Activated CD8-positive, alpha-beta memory T cell treated with anti-CD3 and anti-CD28 coated beads, Interleukin-2, amount 10 ng/mL, durations not matched to agents 7 days and 5 days (primary cell): ENCODE measurements at regions of chr1 and their contacts with region 1.

Region 1: GRCh38 chr1:999725-1000356 is at the start of gene HES4:
- DNase-seq: peak; percentile 45
- ATAC-seq: peak; percentile 34
- H3K4me3 Mint-ChIP-seq: peak within 1 kb of the TSS; percentile 54
- H3K27ac Mint-ChIP-seq: peak within 1 kb of the TSS; percentile 75
- H3K4me1 Mint-ChIP-seq: peaks cover 15% of the 10 kb centered on the region
- H3K27me3 Mint-ChIP-seq: peaks cover 48% of the 10 kb centered on the region
- total RNA-seq, gene HES4: 0.61 to 1.6 TPM

Region 2: DNA sequence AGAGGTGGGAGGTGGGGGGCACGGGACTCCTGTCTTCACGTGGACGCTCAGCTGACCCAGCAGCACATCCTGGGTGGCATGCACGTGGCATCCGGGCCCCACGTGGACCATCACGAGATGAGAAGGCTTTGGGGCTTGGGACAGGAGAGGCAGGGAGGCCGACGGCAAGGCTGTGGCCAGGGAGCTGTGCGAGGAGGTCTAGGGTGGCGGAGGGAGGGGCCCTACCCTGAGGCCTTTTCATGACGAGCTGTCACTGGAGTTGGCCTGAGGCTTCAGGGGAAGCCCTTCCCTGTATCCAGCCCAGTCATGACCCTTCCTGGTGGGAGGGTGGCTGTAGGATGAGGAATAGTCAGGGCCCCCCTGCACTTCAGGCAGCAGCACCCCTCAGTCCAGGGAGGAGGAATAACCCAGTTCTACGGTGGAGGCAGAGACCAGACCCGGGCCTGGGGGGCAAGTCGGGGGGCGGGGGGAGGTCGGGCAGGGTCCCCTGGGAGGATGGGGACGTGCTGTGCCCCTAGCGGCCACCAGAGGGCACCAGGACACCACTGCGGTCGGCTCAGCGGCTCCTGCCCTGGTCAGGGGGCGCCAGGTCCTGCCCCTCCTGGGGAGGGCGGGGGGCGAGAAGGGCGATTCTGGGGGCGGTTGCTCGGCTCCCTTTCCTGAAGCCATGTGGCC is 15.9 kb before region 1 on chr1:
- CTCF ChIA-PET with region 1: interaction called, 73 read pairs
- DNase-seq: peak; percentile 69
- ATAC-seq: peak; percentile 74
- H3K4me3 Mint-ChIP-seq: no peak overlapping the region
- H3K27ac Mint-ChIP-seq: no peak overlapping the region
- H3K4me1 Mint-ChIP-seq: no peaks in the 10 kb centered on the region
- H3K27me3 Mint-ChIP-seq: peaks cover 43% of the 10 kb centered on the region

Region 3: DNA sequence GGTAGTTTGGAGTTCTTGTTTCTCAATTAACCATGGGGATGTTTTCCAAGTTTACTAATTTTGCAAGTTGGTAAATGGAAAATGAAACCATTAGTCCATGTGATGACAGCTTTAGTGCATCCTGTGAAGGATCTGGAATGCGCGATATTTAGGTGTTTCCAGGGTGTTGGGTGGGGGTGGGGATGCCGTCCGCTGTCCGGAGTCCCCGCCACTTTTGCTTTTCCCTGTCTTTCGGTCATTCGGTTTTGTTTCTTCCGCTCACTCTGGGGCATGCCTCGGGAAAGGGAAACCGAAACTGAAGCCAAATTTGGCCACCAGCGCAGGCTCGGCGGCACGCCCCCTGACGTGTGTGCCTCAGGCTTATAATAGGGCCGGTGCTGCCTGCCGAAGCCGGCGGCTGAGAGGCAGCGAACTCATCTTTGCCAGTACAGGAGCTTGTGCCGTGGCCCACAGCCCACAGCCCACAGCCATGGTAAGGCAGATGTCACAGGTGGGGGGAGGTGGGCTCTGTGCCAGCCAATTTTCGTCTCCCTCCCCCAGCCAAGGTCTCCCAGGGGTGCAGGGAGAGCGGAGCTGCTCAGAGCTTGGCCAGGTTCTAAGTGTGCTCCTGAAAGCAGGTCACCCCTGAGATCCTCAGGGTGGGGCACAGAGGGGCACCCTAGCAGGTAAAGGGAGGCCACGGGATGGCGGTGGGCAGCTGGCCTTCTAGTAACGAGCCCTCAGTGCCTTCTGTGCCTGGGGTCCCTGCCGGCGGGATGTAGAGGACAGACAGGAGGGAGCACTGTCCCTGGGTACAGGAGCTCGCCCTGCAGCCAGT is 13.5 kb after region 1 on chr1 and contains the start of gene ISG15:
- CTCF ChIA-PET with region 1: interaction called, 33 read pairs
- DNase-seq: peak; percentile 96
- ATAC-seq: peak; percentile 91
- H3K4me3 Mint-ChIP-seq: peak within 1 kb of the TSS; percentile 99
- H3K27ac Mint-ChIP-seq: peak within 1 kb of the TSS; percentile 95
- H3K4me1 Mint-ChIP-seq: peaks cover 37% of the 10 kb centered on the region
- H3K27me3 Mint-ChIP-seq: peaks cover 9% of the 10 kb centered on the region
- total RNA-seq, gene ISG15: 432 to 986 TPM

Region 4: GRCh38 chr1:1019122-1019999 is 19.5 kb after region 1 on chr1:
- CTCF ChIA-PET with region 1: interaction called, 33 read pairs
- DNase-seq: peak; percentile 86
- ATAC-seq: peak; percentile 82
- H3K4me3 Mint-ChIP-seq: peak overlapping the region; percentile 61
- H3K27ac Mint-ChIP-seq: no peak overlapping the region
- H3K4me1 Mint-ChIP-seq: peaks cover 29% of the 10 kb centered on the region
- H3K27me3 Mint-ChIP-seq: peaks cover 12% of the 10 kb centered on the region

Region 5: DNA sequence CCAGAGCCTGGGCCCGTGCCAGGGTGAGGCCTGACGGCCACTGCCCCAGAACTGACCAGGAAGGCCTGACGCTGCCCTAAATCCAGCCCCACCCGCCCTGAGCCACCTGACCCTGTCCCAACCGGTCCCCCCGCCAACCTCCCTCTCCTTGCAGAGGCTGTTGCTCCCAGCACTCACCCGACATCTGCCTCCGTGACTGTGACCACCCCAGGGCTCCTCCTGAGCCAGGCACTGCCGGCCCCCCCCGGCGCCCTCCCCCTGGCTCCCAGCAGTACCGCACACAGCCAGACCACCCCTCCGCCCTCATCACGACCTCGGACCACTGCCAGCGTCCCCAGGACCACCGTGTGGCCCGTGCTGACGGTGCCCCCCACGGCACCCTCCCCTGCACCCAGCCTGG is 46.4 kb after region 1 on chr1:
- CTCF ChIA-PET with region 1: no interaction called
- DNase-seq: no peak
- ATAC-seq: no peak
- H3K4me3 Mint-ChIP-seq: no peak overlapping the region
- H3K27ac Mint-ChIP-seq: no peak overlapping the region
- H3K4me1 Mint-ChIP-seq: no peaks in the 10 kb centered on the region
- H3K27me3 Mint-ChIP-seq: no peaks in the 10 kb centered on the region